Panc1 (cell line): ENCODE measurements at regions of chr12 and their contacts with region 1.

Region 1: GRCh38 chr12:50862316-50862715 is 19.6 kb downstream of the TMPRSS12 start:
- DNase-seq: peak; percentile 8
- ATAC-seq: no peak
- H3K4me3 ChIP-seq: no peak overlapping the region
- H3K27ac ChIP-seq: no peak overlapping the region
- H3K4me1 ChIP-seq: no peaks in the 10 kb centered on the region
- H3K27me3 ChIP-seq: no peaks in the 10 kb centered on the region
- CTCF ChIP-seq: no peak

Region 2: DNA sequence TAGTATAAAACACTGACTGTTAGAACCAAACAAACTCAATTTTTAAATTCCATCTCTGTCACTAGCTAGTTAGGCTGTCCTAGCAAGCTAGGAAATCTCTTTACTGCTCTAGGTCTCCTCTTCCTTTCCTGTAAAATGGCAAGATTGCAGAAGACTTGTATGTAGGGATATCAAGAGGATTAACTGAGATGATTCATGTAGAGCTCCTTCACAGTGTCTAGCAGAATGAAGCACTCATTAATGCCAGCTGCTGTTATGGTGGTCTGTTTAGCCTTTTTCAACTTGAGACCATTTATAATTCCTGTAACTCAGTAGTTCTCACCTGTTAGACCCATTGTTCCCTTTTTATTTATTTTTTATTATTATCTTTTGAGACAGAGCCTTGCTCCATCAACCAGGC is 1391.3 kb before region 1 on chr12:
- CTCF ChIA-PET with region 1: no interaction called
- POLR2A ChIA-PET with region 1: interaction called, 15 read pairs
- in situ Hi-C with region 1: no loop called
- intact Hi-C with region 1: no loop called
- DNase-seq: no peak
- ATAC-seq: no peak
- H3K4me3 ChIP-seq: no peak overlapping the region
- H3K27ac ChIP-seq: no peak overlapping the region
- H3K4me1 ChIP-seq: no peaks in the 10 kb centered on the region
- H3K27me3 ChIP-seq: no peaks in the 10 kb centered on the region
- CTCF ChIP-seq: no peak

Region 3: DNA sequence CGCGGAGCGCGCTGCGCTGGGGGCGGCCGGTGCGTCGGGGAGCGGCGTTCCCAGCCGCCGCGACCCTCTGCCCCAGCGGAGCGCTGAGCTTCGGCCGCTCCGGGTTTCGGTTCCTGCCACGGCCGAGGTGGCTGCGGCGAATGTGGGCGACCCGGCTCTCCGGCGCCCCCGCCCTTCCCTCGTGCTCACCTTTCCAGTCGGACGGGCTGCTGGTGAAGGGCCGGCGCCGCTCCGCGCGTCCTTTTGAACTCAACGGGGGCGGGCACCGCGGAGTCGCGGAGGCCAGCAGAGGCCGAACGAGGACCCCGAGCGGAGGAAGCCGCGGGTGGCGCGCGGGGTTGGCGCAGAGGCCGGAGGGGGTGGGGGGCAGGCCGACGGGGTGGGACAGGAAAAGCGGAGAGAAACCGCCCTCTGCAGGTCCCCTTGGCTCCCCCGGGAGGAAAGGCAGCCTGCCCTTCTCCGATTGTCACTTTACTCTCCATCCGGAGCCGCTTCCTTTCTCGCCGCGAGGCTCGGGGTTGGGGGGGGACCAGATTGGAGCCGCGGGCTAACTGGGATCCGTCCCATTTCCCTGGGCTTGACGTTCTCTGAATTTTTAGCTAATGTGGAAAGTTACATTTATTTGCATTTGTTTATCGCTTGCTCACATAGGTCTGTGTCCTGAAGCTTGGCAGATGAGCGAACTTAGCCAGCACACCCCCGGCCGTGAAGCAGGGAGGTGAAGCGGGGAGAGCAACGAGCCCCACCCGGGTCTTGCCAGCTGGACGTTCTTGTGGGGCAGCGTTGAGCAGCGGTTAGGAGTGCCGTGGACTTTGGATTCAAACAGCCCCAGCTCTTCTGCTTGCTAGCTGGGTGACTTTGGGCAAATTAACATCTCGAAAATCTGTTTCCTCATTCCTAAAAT is 408.0 kb after region 1 on chr12 and contains the start of gene SMAGP:
- CTCF ChIA-PET with region 1: no interaction called
- POLR2A ChIA-PET with region 1: interaction called, 15 read pairs
- in situ Hi-C with region 1: no loop called
- intact Hi-C with region 1: no loop called
- DNase-seq: no peak
- ATAC-seq: peak; percentile 79
- H3K4me3 ChIP-seq: peak within 1 kb of the TSS; percentile 54 to 69
- H3K27ac ChIP-seq: no peak within 1 kb of the TSS
- H3K4me1 ChIP-seq: peaks cover 6% of the 10 kb centered on the region; the same call in 1 of the 2 replicates
- H3K27me3 ChIP-seq: peaks cover 4% of the 10 kb centered on the region; the same call in 1 of the 2 replicates
- CTCF ChIP-seq: no peak
- total RNA-seq, gene SMAGP: 2.4 TPM